ENCODE measurements at regions of chr3 and their contacts with region 1.

Region 1: DNA sequence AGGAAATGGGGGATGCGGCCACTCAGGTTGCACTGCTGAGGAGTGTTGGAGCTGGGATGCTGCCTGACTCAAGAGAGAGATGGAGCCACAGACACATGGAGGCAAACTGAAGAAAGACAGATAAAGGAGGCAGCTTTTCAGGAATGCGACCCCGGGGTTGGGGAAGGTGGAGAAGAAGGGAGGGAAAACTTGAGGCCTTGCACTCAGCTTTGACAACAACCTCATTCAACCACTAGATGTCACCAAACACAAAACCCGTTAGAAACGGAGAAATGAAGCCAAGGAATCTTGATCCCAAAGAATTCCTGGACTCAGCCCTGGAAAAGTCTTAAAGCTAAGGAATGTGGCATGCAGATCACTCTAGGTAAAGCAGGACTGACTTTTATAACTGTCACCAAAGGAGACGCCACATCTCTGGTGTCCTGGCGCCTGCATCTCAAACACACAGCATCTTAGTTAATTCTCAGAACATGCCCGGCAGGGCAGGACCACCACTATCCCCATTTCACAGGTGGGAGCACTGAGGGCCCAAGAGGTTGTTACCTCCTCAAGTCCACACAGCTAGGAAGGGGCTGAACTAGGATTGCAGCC is 59.6 kb upstream of the LMCD1 start:
- DNase-seq: no peak
- ATAC-seq: peak; percentile 69
- H3K4me3 ChIP-seq: no peak overlapping the region
- H3K27ac ChIP-seq: peak overlapping the region; percentile 58 to 59
- H3K4me1 ChIP-seq: peaks cover 0 to 2% of the 10 kb centered on the region in 2 donors
- H3K27me3 ChIP-seq: no peaks in the 10 kb centered on the region

Region 2: GRCh38 chr3:8501371-8502131 is 59.5 kb after region 1 on chr3 and contains the start of gene LMCD1:
- intact Hi-C with region 1: loop called in 1 of 2 experiments (anchors 1 kb)
- DNase-seq: peak; percentile 98
- ATAC-seq: peak; percentile 97
- H3K4me3 ChIP-seq: peak within 1 kb of the TSS; percentile 90 to 92
- H3K27ac ChIP-seq: peak within 1 kb of the TSS; percentile 83 to 90
- H3K4me1 ChIP-seq: no peaks in the 10 kb centered on the region
- H3K27me3 ChIP-seq: no peaks in the 10 kb centered on the region
- total RNA-seq, gene LMCD1: 192 to 1,289 TPM

Region 3: DNA sequence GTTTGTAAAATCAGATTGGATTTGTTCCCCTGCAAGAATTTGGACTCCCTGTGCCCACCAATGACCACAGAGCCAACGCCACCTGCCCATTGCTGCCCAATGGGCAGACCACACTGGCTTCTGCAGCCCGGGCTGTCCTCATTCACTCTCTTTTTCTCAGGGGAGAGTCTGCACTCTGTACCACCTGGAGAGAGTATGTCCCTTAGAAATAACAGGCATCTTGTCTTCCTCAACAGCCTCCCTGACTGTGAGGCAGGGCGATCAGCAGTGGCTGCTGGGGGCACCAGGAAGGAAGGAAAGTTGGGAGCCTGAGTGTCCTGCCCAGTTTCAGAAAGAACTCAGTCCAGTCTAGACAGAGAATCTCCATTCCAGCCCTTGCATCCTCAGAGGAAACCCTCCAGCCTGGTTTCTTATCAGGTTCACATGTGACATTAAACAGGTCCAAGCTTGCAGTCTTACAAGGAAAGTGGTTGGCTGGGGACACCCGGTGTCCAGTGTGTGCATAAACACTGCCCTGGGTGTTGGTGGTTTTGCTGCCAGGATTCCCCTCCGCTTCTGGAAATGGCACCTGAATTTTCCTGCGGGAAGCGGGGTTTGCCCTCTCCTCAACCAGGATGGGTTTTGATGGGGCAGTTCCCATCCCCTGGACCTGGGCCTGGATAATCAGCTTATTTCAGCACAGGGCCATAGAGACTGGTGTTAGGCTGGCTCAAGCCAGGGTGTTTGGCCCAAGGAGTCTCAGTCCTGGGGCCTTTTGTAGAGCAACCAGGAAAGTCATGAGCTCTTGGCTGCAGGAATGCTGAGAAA is 165.4 kb after region 1 on chr3:
- intact Hi-C with region 1: loop called (anchors 1 to 5 kb)
- DNase-seq: peak in 1 of 2 donors; percentile 79
- ATAC-seq: peak; percentile 93
- H3K4me3 ChIP-seq: no peak overlapping the region
- H3K27ac ChIP-seq: no peak overlapping the region
- H3K4me1 ChIP-seq: no peaks in the 10 kb centered on the region
- H3K27me3 ChIP-seq: no peaks in the 10 kb centered on the region

Region 4: GRCh38 chr3:8622873-8623691 is 181.0 kb after region 1 on chr3:
- intact Hi-C with region 1: loop called (anchors 1 to 5 kb)
- DNase-seq: peak; percentile 73 to 89
- ATAC-seq: peak; percentile 87
- H3K4me3 ChIP-seq: no peak overlapping the region
- H3K27ac ChIP-seq: no peak overlapping the region
- H3K4me1 ChIP-seq: no peaks in the 10 kb centered on the region
- H3K27me3 ChIP-seq: no peaks in the 10 kb centered on the region

Region 5: GRCh38 chr3:8678751-8679150 is 236.7 kb after region 1 on chr3:
- intact Hi-C with region 1: no loop called
- DNase-seq: no peak
- ATAC-seq: no peak
- H3K4me3 ChIP-seq: no peak overlapping the region
- H3K27ac ChIP-seq: no peak overlapping the region
- H3K4me1 ChIP-seq: no peaks in the 10 kb centered on the region
- H3K27me3 ChIP-seq: no peaks in the 10 kb centered on the region